ENCODE measurements at regions of chrX and their contacts with region 1.

Region 1: GRCh38 chrX:22041907-22042530 is 9.9 kb downstream of the PHEX start:
- DNase-seq: no peak
- ATAC-seq: peak; percentile 13
- H3K4me3 ChIP-seq: no peak overlapping the region
- H3K27ac ChIP-seq: no peak overlapping the region
- H3K4me1 ChIP-seq: no peaks in the 10 kb centered on the region
- H3K27me3 ChIP-seq: no peaks in the 10 kb centered on the region
- CTCF ChIP-seq: no peak
- EP300 ChIP-seq: no peak
- POLR2A ChIP-seq: no peak
- RAD21 ChIP-seq: no peak

Region 2: DNA sequence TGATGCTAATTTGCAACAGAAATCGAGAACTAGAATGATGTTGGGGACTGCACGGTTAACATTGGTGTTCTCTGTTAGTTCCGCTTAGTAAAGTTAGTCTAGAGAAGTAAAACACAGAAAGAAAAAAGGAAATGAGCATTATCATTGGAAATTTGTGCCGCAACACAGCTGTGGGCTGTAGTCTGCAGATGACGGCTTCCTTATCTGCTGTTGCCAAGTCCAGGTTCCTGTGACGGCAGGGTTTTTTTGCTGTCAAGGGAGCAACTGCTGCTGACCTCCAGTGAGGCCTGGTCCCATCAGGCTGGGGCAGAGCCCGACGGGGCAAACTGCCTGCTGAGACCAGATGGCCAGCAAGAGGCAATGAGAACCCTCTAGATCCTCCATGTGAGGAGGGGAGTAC is 48.8 kb before region 1 on chrX:
- CTCF ChIA-PET with region 1: interaction called, 6 read pairs
- POLR2A ChIA-PET with region 1: interaction called, 6 read pairs
- RAD21 ChIA-PET with region 1: interaction called, 51 read pairs
- SMC1A ChIA-PET with region 1: interaction called, 69 read pairs
- in situ Hi-C with region 1: no loop called
- intact Hi-C with region 1: no loop called
- DNase-seq: peak; percentile 30
- ATAC-seq: peak; percentile 36
- H3K4me3 ChIP-seq: no peak overlapping the region
- H3K27ac ChIP-seq: peak overlapping the region; percentile 62
- H3K4me1 ChIP-seq: peaks cover 16% of the 10 kb centered on the region
- H3K27me3 ChIP-seq: no peaks in the 10 kb centered on the region
- CTCF ChIP-seq: no peak
- EP300 ChIP-seq: no peak; a peak in 1 of 4 replicates
- POLR2A ChIP-seq: no peak
- RAD21 ChIP-seq: no peak

Region 3: GRCh38 chrX:22069586-22069985 is 27.6 kb after region 1 on chrX:
- CTCF ChIA-PET with region 1: interaction called, 4 read pairs
- POLR2A ChIA-PET with region 1: interaction called, 4 read pairs
- RAD21 ChIA-PET with region 1: interaction called, 9 read pairs
- SMC1A ChIA-PET with region 1: interaction called, 11 read pairs
- in situ Hi-C with region 1: no loop called
- intact Hi-C with region 1: no loop called
- DNase-seq: no peak
- ATAC-seq: peak; percentile 21; the same call in 1 of the 3 replicates
- H3K4me3 ChIP-seq: no peak overlapping the region
- H3K27ac ChIP-seq: no peak overlapping the region
- H3K4me1 ChIP-seq: no peaks in the 10 kb centered on the region
- H3K27me3 ChIP-seq: no peaks in the 10 kb centered on the region
- CTCF ChIP-seq: no peak
- EP300 ChIP-seq: no peak
- POLR2A ChIP-seq: no peak
- RAD21 ChIP-seq: no peak

Measured in GM12878 (cell line).